A549 (cell line): ENCODE measurements at regions of chr14 and their contacts with region 1.

Region 1: DNA sequence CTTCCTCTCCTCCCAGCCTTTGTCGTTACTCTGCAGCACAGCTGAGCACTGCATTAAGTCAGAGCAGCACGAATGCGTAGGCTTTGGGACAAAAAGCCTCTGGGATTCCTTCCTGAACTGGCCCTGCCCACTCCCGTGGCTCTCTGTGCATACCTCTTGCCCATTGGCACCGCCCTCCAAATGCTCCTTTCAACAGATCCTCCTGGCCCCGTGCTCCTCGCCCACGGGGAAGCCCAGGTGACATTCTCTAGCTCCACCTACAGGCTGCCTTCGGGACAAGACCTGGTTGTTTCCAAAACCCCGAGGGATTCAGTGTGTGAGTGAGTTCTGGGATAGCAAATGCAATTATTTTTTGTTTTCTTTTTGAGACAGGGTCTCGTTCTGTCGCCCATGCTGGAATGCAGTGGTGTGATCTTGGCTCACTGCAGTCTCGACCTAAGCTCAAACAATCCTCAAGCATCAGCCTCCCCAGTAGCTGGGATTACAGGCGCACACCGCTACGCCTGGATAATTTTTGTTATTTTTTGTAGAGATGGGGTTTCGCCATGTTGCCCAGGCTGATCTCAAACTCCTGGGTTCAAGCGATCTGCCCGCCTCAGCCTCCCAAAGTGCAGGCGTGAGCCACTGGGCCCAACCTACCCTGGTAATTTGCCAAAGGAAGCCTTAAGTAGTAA is 17.9 kb upstream of the TDRD9 start:
- DNase-seq: peak; percentile 82 to 89
- ATAC-seq: peak; percentile 94 to 96
- H3K4me3 ChIP-seq: no peak overlapping the region
- H3K27ac ChIP-seq: 0 out of 6 replicates have a peak overlapping the region, but pooled peaks of 1 of the 2 experiments have one; percentile 39
- H3K4me1 ChIP-seq: peaks cover 3% of the 10 kb centered on the region; the same call in 1 of the 3 replicates
- CTCF ChIP-seq: peak; percentile 82
- EP300 ChIP-seq: no peak
- POLR2A ChIP-seq: no peak
- RAD21 ChIP-seq: peak; percentile 82 to 89

Region 2: GRCh38 chr14:103819503-103820307 is 90.7 kb before region 1 on chr14:
- CTCF ChIA-PET with region 1: interaction called, 18 read pairs
- POLR2A ChIA-PET with region 1: no interaction called
- DNase-seq: no peak
- ATAC-seq: peak in 1 of 2 experiments; percentile 45; a peak in 4 of 6 replicates
- H3K4me3 ChIP-seq: no peak overlapping the region
- H3K27ac ChIP-seq: no peak overlapping the region
- H3K4me1 ChIP-seq: no peaks in the 10 kb centered on the region; the same call in 2 of the 3 replicates
- CTCF ChIP-seq: no peak
- EP300 ChIP-seq: no peak
- POLR2A ChIP-seq: no peak
- RAD21 ChIP-seq: no peak

Region 3: DNA sequence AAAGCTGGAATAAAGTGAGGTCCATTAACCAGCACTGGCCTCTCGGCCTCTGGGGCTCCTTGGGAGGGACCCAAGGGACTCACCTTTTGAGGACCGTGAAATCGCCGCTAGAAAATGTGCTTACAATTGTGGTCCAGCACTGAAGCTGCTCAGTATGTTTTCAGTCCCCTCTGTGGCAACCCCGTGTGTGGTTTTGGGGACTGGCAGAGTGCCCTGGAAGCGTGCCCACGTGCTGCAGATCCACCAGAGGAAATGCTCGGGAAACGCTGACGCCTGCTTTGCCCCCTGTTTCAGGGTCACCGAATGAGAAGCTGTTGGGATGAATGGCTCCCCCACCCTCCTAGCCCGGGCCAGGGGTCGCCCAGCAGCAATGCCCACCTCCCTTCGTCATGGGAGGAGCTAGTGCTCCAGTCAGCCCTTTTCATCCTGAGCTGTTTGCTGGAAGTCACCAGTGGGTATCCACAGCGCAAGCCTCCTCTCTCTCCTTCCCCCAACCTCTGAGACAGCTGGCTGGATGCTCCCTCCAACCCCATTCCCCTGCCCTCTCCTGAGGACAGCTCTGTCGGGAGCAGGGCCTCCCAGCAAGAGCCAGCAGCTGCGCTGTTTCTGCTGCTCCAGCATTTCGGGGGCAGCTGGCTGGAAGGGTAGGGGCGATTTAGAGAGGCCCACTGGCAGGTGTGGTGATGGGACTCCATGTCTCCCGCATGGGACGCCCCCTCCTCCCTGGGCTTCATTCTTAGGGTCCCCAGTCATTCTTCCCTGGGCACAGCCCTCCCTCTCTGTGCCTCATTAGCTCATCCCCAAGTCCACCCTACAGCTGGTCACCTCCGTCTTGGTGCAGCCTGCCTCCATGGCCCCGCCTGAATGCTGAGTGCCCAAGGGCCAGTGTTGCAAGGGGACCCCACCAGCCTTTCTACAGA is 29.8 kb before region 1 on chr14:
- CTCF ChIA-PET with region 1: interaction called, 18 read pairs
- POLR2A ChIA-PET with region 1: no interaction called
- DNase-seq: peak in 1 of 2 experiments; percentile 54
- ATAC-seq: peak; percentile 60 to 69
- H3K4me3 ChIP-seq: peak overlapping the region; percentile 35
- H3K27ac ChIP-seq: peak overlapping the region; percentile 86 to 94
- H3K4me1 ChIP-seq: peaks cover 21% of the 10 kb centered on the region
- CTCF ChIP-seq: no peak
- EP300 ChIP-seq: no peak
- POLR2A ChIP-seq: no peak
- RAD21 ChIP-seq: no peak

Region 4: DNA sequence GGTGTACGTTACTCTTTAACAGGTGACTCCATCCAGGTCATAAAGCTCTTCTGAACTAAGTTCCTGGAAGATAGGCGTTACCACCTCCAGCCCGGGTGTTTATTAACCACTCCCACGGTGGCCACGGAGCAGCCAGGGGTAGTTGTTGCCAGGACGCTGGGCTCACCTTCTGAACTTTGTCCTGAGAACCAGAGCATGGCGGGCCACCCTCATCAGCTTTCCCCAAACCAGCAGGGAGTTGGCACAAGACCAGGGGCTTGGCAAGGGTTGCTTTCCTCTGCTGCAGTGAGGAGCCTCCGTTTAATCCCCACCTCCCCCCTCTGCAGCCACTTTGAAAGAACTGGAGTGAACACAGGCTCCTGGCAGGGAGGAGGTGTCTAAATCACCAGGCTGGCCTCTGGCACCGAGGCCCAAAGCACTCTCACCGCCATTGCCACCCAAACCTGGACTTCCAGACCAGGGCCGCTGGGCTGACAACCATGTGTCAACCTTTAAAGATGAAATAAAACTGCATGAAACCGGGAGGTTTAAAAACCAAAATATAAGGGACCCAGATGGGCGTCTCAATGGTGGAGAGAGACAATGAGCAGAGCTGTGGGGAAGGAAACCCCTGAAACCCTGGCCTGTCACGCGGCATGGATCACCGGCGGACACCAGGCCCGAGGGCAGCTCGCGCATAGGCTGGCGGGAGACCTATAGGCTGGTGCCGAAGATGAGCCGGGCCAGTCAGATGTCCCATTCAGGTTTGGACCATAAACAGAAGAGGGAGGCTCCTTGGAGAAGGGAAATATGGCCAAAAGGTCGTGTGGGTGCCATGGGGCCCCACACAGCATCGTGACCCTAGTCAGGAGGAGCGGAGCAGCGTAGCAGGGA is 13.1 kb before region 1 on chr14:
- CTCF ChIA-PET with region 1: interaction called, 72 read pairs
- POLR2A ChIA-PET with region 1: interaction called, 5 read pairs
- DNase-seq: no peak
- ATAC-seq: no peak
- H3K4me3 ChIP-seq: no peak overlapping the region
- H3K27ac ChIP-seq: peak overlapping the region; percentile 14 to 15; a peak in 1 of 6 replicates
- H3K4me1 ChIP-seq: peaks cover 12% of the 10 kb centered on the region; the same call in 1 of the 3 replicates
- CTCF ChIP-seq: no peak
- EP300 ChIP-seq: no peak
- POLR2A ChIP-seq: no peak
- RAD21 ChIP-seq: no peak

Region 5: DNA sequence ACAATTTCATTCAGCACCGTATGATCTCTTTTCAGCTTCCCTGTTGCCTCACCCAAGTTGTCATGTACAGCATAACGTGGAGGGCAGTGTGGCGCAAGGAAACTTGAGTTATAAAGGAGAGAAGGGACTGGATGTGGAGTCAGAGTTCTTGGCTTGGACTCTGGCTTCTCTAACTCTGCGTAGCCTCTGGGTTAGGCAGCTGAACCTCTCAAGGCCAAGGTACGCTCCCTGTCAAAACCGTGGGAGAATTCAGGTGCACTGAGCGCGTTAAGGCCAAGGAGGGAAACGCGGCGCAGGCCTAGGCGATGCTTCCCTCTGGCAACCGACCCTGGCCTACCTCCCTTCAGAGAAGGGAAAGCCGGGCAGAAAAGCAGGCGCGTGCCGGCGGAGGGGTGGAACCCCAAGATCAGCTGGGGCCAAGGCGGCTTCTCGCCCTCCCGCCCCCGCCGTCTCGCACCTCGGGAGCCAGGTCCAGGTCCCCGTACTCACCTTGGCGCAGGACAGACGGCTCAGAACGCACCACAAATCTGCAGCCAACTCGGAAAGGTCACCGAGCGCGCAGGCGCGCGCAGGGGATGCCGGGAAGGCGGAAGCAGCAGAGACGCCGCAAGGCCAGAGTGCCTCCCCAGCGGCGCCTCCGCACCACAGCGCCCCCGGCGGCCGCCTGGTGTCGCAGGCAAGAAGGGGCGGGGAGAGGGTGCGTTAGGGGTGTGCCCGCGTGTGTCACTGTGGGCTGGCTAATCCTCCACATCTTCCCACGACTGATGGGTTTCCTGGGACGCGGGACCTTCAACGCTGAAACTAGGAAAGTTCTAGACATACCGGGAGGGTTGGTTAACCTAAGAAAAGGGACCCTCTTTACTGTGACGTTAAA is 10.8 kb after region 1 on chr14:
- CTCF ChIA-PET with region 1: interaction called, 69 read pairs
- POLR2A ChIA-PET with region 1: no interaction called
- DNase-seq: peak; percentile 87 to 93
- ATAC-seq: peak; percentile 99 to 100
- H3K4me3 ChIP-seq: peak overlapping the region; percentile 63
- H3K27ac ChIP-seq: peak overlapping the region; percentile 81 to 93
- H3K4me1 ChIP-seq: peaks cover 10% of the 10 kb centered on the region
- CTCF ChIP-seq: peak; percentile 90
- EP300 ChIP-seq: no peak
- POLR2A ChIP-seq: peak; percentile 80
- RAD21 ChIP-seq: peak; percentile 3 to 37; a peak in 2 of 5 replicates